Activated naive CD4-positive, alpha-beta T cell treated with anti-CD3 and anti-CD28 coated beads for 36 hours (primary cell): ENCODE measurements at regions of chr12 and their contacts with region 1.

Region 1: GRCh38 chr12:47882781-47883546 is 21.8 kb downstream of the VDR start:
- DNase-seq: peak; percentile 73
- H3K4me3 Mint-ChIP-seq: peak overlapping the region; percentile 78
- H3K27ac Mint-ChIP-seq: peak overlapping the region; percentile 97
- H3K4me1 Mint-ChIP-seq: peaks cover 69% of the 10 kb centered on the region
- H3K27me3 Mint-ChIP-seq: no peaks in the 10 kb centered on the region

Region 2: GRCh38 chr12:47534695-47535094 is 348.3 kb before region 1 on chr12:
- CTCF ChIA-PET with region 1: no interaction called
- intact Hi-C with region 1: no loop called
- DNase-seq: no peak
- H3K4me3 Mint-ChIP-seq: no peak overlapping the region
- H3K27ac Mint-ChIP-seq: no peak overlapping the region
- H3K4me1 Mint-ChIP-seq: peaks cover 5% of the 10 kb centered on the region
- H3K27me3 Mint-ChIP-seq: no peaks in the 10 kb centered on the region

Region 3: DNA sequence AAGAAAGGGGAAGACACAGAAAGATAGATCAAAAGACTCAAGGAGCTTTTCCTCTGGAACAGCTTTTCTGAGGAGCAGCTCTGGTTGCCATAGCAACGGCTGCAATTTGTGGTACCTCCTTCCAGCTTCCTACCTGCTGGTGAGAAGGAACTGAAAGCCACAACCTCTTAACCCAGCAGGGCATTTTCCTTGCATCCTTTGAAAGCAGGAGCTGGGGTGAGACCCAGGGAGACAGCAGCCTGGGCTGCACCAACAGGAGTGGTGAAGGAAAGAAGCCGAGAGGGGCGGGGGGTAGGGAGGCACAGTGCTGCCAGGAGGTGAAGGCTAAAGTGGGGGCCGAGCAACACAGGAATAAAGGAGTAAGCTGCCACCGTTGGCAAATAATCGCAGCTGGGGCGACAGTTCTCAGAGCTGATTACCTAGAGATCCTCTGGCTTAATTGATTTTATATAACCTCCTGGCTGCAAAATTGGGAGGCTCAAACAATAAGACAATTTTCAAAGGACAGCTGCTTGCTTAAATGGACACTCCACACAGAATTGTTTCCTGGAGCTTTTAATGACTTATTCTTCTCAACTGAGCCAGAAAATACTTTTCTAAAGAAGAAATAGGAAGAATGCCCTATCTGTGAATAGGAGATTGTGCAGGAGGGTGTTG is 306.5 kb before region 1 on chr12:
- CTCF ChIA-PET with region 1: no interaction called
- intact Hi-C with region 1: loop called (anchors 1 kb)
- DNase-seq: no peak
- H3K4me3 Mint-ChIP-seq: no peak overlapping the region
- H3K27ac Mint-ChIP-seq: no peak overlapping the region
- H3K4me1 Mint-ChIP-seq: peaks cover 30% of the 10 kb centered on the region
- H3K27me3 Mint-ChIP-seq: no peaks in the 10 kb centered on the region

Region 4: GRCh38 chr12:47828608-47829536 is 54.1 kb before region 1 on chr12:
- CTCF ChIA-PET with region 1: interaction called, 3 read pairs
- intact Hi-C with region 1: loop called (anchors 1 kb)
- DNase-seq: peak; percentile 63
- H3K4me3 Mint-ChIP-seq: peak overlapping the region; percentile 63
- H3K27ac Mint-ChIP-seq: peak overlapping the region; percentile 86
- H3K4me1 Mint-ChIP-seq: peaks cover 86% of the 10 kb centered on the region
- H3K27me3 Mint-ChIP-seq: no peaks in the 10 kb centered on the region

Region 5: GRCh38 chr12:47870175-47870781 is 12.7 kb before region 1 on chr12:
- CTCF ChIA-PET with region 1: interaction called, 10 read pairs
- intact Hi-C with region 1: no loop called
- DNase-seq: no peak
- H3K4me3 Mint-ChIP-seq: no peak overlapping the region
- H3K27ac Mint-ChIP-seq: no peak overlapping the region
- H3K4me1 Mint-ChIP-seq: peaks cover 33% of the 10 kb centered on the region
- H3K27me3 Mint-ChIP-seq: no peaks in the 10 kb centered on the region

Region 6: DNA sequence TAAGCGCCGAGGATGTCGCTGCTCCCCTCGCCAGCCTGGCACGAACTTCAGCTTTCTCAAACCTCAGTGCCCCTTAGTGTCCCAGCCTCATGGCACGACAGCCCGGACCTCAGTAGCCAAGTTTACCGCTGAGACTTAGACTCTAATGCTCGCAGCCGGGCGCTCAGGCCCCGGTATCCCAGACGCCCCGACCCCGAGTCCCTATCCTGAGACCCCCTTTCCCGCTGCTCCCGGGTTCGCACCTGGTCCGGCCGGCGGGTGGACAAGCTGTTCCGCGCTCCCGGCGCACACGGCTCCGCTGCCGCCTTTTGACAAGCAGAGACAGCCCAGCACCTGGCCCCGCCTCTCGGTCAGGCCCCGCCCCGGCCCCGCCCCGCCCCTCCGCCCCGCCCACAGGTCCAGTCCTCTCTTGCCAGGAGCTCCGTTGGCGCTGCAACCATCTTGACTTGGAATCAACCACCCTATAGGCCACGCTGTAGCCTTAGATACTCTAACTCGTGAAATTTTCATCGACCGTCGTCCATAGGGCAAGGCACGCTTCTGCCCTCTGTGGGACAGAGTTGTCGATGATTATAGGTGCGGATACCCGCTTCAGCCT is 21.8 kb after region 1 on chr12 and contains the start of gene VDR:
- CTCF ChIA-PET with region 1: interaction called, 17 read pairs
- intact Hi-C with region 1: loop called (anchors 1 kb)
- DNase-seq: peak; percentile 81
- H3K4me3 Mint-ChIP-seq: peak within 1 kb of the TSS; percentile 98
- H3K27ac Mint-ChIP-seq: peak within 1 kb of the TSS; percentile 93
- H3K4me1 Mint-ChIP-seq: peaks cover 42% of the 10 kb centered on the region
- H3K27me3 Mint-ChIP-seq: peaks cover 19% of the 10 kb centered on the region
- total RNA-seq, gene VDR: 56.4 to 57.7 TPM

Region 7: GRCh38 chr12:48157018-48157888 is 274.3 kb after region 1 on chr12 and contains the start of gene ASB8:
- CTCF ChIA-PET with region 1: interaction called, 3 read pairs
- intact Hi-C with region 1: loop called (anchors 1 kb)
- DNase-seq: peak; percentile 100
- H3K4me3 Mint-ChIP-seq: peak within 1 kb of the TSS; percentile 93
- H3K27ac Mint-ChIP-seq: peak within 1 kb of the TSS; percentile 96
- H3K4me1 Mint-ChIP-seq: peaks cover 47% of the 10 kb centered on the region
- H3K27me3 Mint-ChIP-seq: no peaks in the 10 kb centered on the region
- total RNA-seq, gene ASB8: 36.7 to 47.9 TPM